ENCODE measurements at regions of chr7 and their contacts with region 1.

Region 1: DNA sequence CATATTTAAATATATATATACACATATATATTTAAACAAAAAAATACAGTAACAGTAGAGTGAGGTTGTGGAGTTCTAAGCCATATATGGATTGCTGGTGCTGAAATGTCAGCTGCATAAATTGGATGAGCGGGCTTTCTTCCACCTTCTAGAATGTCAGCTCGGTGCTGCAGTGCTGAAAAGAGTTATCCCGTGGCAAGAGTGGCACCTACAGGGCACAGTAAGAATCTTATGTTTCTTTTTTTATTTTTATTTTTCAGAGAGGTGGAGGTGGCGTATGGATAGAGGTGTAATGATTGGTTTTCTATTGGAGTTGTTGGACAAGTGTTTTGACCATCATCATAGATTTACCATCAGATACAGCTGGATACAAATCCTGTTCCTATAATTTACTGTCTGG is 86.2 kb upstream of the DYNC1I1 start:
- DNase-seq: no peak
- ATAC-seq: peak; percentile 81
- H3K4me3 ChIP-seq: no peak overlapping the region
- H3K27ac ChIP-seq: no peak overlapping the region
- H3K4me1 ChIP-seq: peaks cover 7% of the 10 kb centered on the region
- H3K27me3 ChIP-seq: no peaks in the 10 kb centered on the region
- CTCF ChIP-seq: peak; percentile 53

Region 2: DNA sequence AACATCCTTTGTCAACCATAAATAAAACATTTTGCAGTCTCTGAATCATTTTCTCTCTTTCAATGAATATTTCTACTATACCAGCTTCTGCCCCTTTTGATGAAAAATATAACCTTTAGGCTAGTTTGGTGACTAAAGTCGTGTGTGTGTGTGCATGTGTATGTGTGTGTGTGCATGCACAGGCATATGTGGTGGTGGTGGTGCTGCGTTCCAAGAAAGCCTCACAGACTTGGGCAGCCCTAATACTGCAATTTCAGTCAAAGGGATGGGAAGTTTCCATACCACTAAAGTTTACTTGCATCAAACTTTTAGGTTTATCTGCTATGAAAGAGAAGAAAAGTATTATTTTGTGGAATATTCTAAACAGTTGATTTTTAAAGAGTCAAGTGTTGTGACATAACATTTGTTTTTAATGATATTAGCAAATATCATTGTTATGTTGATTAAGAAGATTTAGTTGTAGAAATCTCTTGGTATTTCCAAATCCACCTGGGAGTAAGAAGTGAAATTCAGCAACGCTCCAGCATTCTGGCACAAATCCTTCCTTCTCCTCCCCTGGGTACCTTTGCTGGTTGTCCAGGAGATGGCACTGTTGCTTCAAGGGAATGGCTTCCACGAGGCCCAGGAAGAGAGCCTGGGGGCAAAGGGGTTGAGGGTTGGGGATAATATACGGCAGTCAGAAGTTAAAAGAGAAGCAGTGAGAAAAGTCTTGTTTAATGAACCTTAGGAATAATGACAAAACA is 158.9 kb before region 1 on chr7:
- intact Hi-C with region 1: loop called (anchors 5 kb)
- DNase-seq: no peak
- ATAC-seq: peak; percentile 92
- H3K4me3 ChIP-seq: no peak overlapping the region
- H3K27ac ChIP-seq: no peak overlapping the region
- H3K4me1 ChIP-seq: no peaks in the 10 kb centered on the region
- H3K27me3 ChIP-seq: no peaks in the 10 kb centered on the region
- CTCF ChIP-seq: peak; percentile 93

Region 3: GRCh38 chr7:95886501-95887090 is 200.5 kb after region 1 on chr7:
- intact Hi-C with region 1: no loop called
- DNase-seq: no peak
- ATAC-seq: peak; percentile 44
- H3K4me3 ChIP-seq: no peak overlapping the region
- H3K27ac ChIP-seq: no peak overlapping the region
- H3K4me1 ChIP-seq: no peaks in the 10 kb centered on the region
- H3K27me3 ChIP-seq: no peaks in the 10 kb centered on the region
- CTCF ChIP-seq: no peak